ENCODE measurements at regions of chr14 and their contacts with region 1.

Region 1: GRCh38 chr14:90903101-90903500 is 86.9 kb upstream of the TTC7B start:
- DNase-seq: peak; percentile 45 to 46
- ATAC-seq: peak; percentile 96

Region 2: DNA sequence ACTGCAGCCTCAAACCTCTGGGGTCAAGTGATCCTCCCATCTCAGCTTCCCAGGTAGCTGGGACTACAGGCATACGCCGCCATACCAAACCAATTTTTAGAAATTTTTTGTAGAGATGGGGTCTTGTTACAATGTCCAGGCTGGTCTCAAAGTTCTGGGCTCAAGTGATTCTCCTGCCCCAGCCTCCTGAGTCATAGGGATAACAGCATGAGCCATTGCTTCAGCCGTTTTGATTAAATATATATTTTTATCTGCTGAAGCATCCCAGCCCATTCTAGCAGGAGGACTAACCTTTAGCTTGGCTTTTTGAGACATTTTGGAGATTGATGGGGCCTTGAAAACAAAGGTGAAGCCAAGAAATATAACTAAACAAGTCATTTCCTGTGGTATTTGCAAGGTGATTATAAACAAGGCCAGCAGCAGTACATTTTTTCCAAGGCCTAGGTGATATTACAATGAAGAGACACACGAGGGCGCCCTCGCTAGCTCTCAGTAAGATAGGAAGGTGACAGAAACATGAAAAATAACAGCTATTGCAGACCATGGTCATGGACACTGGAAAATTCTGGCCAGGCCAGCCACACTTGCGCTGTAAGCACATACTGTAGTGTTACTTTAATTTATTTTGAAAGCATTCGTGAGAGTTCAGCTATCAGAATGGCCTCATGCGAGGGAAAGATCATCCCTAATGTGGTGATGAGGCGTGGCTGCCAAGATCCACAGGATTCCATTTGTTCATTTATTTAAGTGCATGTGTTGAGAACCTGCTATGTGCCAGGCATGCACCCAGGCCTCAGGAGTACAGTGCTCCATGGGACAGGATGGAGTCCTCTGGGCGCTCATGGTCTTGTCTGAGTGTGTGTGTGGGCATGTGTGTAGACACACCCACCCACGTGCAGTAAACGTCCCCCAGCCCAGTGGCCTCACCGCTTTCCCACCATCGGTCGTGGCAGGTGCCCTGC is 274.3 kb after region 1 on chr14:
- intact Hi-C with region 1: loop called (anchors 2 to 10 kb)
- DNase-seq: peak in 1 of 2 donors; percentile 57
- ATAC-seq: peak; percentile 61

Region 3: DNA sequence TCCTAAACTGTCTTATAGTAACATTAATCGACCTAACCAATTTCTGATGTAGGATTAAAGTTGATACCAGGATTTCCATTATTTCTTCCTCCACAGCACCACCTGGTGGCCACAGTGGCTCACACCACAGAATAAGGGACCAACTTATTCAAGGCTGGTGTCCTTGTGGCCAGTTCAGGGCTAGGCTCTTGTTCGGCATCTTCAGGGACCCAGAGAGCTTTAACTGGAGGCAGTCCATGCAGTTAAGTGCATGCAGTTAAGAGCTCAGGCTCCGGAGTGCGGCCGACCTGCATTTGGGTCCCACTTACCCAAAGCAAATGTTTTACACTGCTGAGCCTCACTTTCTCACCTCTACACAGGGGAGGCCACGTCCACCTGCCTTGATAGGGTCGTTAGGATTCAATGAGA is 383.4 kb after region 1 on chr14:
- intact Hi-C with region 1: loop called in 1 of 2 experiments (anchors 5 kb)
- DNase-seq: peak in 1 of 2 donors; percentile 82
- ATAC-seq: peak; percentile 84

Measured in left colon (tissue), 2 donors.